ENCODE measurements at regions of chr11 and their contacts with region 1.

Region 1: DNA sequence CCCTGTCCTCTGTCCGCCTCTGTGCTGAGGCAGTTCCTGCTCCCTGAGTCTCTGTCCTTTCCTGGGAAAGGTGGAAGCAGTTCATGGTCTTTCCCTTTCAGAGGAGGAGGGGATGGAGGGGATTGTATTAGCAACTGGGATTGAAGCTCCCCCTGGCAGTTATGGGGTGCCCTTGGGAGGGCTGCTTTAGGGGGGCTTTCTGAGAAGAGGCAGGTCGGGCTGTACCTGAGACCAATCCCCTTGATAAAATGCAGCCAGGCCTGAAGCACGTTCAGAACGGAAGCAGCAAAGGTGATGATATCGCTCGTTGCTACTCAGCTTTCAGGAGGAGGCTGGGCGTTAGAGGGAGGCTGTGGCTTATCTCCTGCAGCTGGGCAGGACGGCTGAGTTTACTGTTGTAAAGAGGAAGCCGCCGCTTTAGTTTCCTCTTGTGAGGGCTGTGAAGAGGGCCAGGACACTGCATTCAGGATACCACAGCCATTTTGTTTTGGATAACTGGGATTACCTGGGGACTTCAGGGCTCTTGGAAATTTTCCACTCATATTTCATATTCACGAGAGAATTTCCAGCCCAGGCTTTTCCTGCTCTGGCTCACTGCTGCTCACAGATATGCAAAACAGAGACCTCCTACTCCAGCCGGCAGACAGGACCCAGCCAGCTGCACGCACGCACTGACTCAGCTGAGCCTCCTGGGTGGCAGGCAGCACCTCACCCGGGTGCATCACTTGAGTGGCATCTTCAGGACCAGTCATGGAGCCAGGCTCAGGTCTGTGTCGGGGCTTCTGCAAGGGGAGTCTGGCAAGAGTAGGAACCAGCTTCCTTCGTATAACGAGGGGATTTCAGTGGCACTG is 798 bp downstream of the AMPD3 start:
- DNase-seq: peak; percentile 65
- ATAC-seq: peak; percentile 84
- H3K4me3 Mint-ChIP-seq: peak overlapping the region; percentile 95
- H3K27ac Mint-ChIP-seq: peak overlapping the region; percentile 93
- H3K4me1 Mint-ChIP-seq: peaks cover 50% of the 10 kb centered on the region
- H3K27me3 Mint-ChIP-seq: peaks cover 23% of the 10 kb centered on the region

Region 2: DNA sequence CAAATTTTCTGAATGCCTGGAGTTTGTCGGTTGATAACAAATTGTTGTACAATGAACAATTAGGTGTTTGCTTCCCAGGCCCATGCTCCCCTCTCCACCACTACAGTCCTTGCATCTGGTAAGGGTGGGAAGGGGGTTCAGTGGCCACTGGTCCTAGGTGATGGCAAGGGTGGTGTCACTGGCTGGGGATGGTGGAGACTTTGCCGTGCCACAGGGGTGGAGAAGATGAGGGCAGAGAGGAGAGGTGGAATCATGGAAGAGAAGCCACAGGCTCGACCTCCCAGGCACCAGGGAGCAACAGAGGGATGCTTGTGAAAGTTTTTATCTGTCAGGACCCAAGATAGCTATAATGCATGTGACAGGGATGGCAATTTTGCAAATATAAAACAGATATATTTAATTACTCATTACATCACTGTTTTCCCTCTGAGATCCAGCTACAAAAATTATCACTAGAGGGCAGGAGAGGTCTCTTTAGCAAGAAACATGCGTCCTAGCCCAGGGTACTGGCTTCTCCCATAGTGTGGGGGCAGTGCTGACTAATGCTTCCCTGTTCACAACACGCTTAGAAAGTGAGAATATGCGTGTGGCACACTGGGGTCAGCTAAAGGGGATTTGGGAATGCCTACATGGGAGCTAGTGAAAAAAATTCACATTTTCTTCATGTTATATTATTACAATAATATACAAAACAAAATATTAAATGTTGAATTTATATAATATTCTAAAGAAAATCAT is 49.8 kb before region 1 on chr11:
- POLR2A ChIA-PET with region 1: no interaction called
- DNase-seq: no peak
- ATAC-seq: peak; percentile 66
- H3K4me3 Mint-ChIP-seq: no peak overlapping the region
- H3K27ac Mint-ChIP-seq: no peak overlapping the region
- H3K4me1 Mint-ChIP-seq: peaks cover 15% of the 10 kb centered on the region
- H3K27me3 Mint-ChIP-seq: peaks cover 4% of the 10 kb centered on the region

Region 3: DNA sequence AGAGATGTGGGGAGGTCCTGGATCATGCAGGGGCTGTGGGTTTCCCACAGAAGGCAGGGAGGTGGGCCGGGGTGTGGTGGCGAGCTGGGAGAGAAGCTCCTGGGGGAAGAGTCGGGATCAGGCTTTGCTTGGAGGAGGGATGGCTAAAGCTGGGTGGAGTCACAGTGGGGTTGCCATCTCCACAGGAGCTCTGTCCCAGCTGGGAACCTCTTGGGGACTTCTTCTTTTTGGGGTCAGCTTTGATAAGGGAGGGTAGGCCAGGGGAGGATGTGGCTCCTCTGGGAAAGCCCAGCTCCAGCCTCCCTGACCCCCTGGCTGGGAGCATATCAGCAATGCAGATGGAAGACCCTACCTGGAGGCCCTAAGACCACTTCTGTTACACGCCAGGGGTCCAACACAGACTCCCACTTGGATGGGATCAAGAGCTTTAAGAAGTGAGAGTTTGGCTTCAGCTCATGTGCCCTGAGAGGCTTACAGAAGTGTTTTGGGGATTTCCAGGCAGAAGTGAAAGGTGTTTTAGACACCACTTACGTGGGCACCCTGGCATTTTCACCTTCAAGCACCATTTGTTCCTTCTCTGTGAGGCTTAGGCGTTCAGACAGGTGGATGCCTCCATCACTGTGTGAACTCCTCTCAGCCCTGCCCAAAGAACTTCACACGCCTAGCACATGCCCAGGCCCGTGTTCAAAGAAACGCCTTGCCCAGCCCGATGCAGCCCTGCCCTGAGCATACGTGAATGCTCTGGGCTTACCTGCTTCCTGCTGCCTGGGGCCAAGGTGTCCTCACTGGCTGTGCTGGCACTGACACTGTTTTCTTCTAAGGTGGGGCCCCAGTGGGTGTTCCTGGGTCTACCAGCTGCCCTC is 33.0 kb after region 1 on chr11:
- POLR2A ChIA-PET with region 1: interaction called, 10 read pairs
- DNase-seq: no peak
- ATAC-seq: no peak
- H3K4me3 Mint-ChIP-seq: no peak overlapping the region
- H3K27ac Mint-ChIP-seq: peak overlapping the region; percentile 46
- H3K4me1 Mint-ChIP-seq: peaks cover 9% of the 10 kb centered on the region
- H3K27me3 Mint-ChIP-seq: no peaks in the 10 kb centered on the region

Region 4: GRCh38 chr11:10502770-10503169 is 46.9 kb after region 1 on chr11:
- POLR2A ChIA-PET with region 1: no interaction called
- DNase-seq: no peak
- ATAC-seq: no peak
- H3K4me3 Mint-ChIP-seq: no peak overlapping the region
- H3K27ac Mint-ChIP-seq: no peak overlapping the region
- H3K4me1 Mint-ChIP-seq: no peaks in the 10 kb centered on the region
- H3K27me3 Mint-ChIP-seq: no peaks in the 10 kb centered on the region

Region 5: DNA sequence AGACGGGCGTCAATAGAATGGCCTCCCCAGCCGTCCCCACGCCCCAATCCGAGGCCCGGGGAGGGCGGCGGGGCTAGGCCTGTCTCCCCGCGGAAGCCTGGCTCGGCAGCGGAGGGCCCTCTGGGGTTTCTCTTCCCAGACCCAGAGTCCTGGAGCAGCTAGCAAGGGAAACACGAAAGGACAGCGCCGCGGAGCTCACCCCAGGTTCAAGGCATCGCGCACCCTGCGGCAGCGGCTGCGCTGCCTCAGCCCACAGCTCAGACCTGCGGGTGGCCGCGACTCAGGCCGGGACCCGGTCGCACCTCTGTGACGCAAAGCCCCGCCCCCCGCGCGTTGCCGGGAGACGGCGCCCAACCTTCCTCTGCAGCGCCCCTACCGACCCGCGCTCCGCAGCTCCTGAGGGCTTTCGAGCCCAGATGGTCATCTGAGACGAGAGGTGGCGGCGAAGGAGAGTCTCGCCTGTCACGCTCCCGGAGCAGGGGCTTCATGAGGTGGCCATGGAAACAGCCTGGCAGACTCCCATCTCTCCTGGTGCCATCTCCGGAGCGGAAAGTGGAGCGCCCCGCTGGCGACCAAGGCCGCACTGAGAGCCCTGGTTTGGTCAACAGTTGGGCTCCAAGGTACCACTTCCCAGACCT is 85.2 kb after region 1 on chr11 and contains the start of gene RNF141:
- POLR2A ChIA-PET with region 1: interaction called, 22 read pairs
- DNase-seq: peak; percentile 99
- ATAC-seq: peak; percentile 97
- H3K4me3 Mint-ChIP-seq: peak within 1 kb of the TSS; percentile 90
- H3K27ac Mint-ChIP-seq: peak within 1 kb of the TSS; percentile 75
- H3K4me1 Mint-ChIP-seq: peaks cover 17% of the 10 kb centered on the region
- H3K27me3 Mint-ChIP-seq: peaks cover 3% of the 10 kb centered on the region
- total RNA-seq, gene RNF141: 13.6 to 13.8 TPM

Measured in activated naive CD8-positive, alpha-beta T cell treated with anti-CD3 and anti-CD28 coated beads, Interleukin-2, amount 10 ng/mL, durations not matched to agents 7 days and 5 days (primary cell).